CD4-positive, alpha-beta memory T cell (primary cell): ENCODE measurements at regions of chr12 and their contacts with region 1.

Region 1: GRCh38 chr12:44930972-44931600 is 55.0 kb upstream of the NELL2 start:
- DNase-seq: peak in 4 of 5 donors; percentile 61 to 68 (median 68)
- H3K4me3 ChIP-seq: no peak overlapping the region
- H3K4me3 Mint-ChIP-seq: no peak overlapping the region
- H3K27ac ChIP-seq: no peak overlapping the region
- H3K27ac Mint-ChIP-seq: no peak overlapping the region
- H3K4me1 ChIP-seq: no peaks in the 10 kb centered on the region
- H3K4me1 Mint-ChIP-seq: peaks cover 0 to 2% (median under 1%) of the 10 kb centered on the region in 4 donors
- H3K27me3 ChIP-seq: no peaks in the 10 kb centered on the region
- H3K27me3 Mint-ChIP-seq: no peaks in the 10 kb centered on the region

Region 2: DNA sequence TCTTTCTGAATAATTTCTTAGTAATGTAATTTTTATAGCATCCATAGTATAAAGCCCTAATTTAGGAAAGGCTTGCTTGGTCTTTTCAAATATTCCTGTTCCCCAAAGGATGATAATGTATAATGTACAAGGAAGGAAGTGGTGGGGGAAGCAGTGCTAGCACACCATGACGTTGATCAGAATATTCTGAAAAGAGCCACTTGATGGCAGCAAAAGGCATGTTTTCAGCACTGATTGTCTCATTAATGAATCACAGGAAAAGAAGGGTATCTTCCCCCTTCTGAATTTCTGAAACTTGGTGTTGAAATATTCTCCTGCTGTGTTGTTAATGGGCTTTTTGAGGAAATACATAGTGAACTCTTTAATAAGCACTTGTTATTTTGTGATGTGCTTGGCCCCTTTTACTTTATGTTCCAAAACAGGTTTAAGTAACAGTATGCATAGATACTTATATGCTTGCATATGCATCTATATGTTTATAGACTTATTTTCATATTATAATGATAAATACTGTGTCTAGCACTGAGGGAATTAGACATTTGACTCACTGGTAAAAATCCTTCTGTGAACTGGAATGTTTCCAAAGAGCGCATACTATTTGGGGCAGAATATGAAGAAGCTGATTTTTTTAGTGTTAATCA is 973.2 kb before region 1 on chr12:
- CTCF ChIA-PET with region 1: interaction called, 3 read pairs
- POLR2A ChIA-PET with region 1: no interaction called
- intact Hi-C with region 1: loop called (anchors 1 kb)
- DNase-seq: peak in 4 of 5 donors; percentile 5 to 10 (median 10)
- H3K4me3 ChIP-seq: no peak overlapping the region
- H3K4me3 Mint-ChIP-seq: no peak overlapping the region
- H3K27ac ChIP-seq: no peak overlapping the region
- H3K27ac Mint-ChIP-seq: no peak overlapping the region
- H3K4me1 ChIP-seq: no peaks in the 10 kb centered on the region
- H3K4me1 Mint-ChIP-seq: peaks cover 0 to 20% (median 4%) of the 10 kb centered on the region in 4 donors
- H3K27me3 ChIP-seq: no peaks in the 10 kb centered on the region
- H3K27me3 Mint-ChIP-seq: no peaks in the 10 kb centered on the region

Region 3: GRCh38 chr12:44015335-44015941 is 915.6 kb before region 1 on chr12:
- CTCF ChIA-PET with region 1: interaction called, 35 read pairs
- POLR2A ChIA-PET with region 1: no interaction called
- intact Hi-C with region 1: no loop called
- DNase-seq: peak in 4 of 5 donors; percentile 39 to 46 (median 41)
- H3K4me3 ChIP-seq: no peak overlapping the region
- H3K4me3 Mint-ChIP-seq: no peak overlapping the region
- H3K27ac ChIP-seq: no peak overlapping the region
- H3K27ac Mint-ChIP-seq: no peak overlapping the region
- H3K4me1 ChIP-seq: no peaks in the 10 kb centered on the region
- H3K4me1 Mint-ChIP-seq: peaks cover 0 to 2% (median under 1%) of the 10 kb centered on the region in 4 donors
- H3K27me3 ChIP-seq: no peaks in the 10 kb centered on the region
- H3K27me3 Mint-ChIP-seq: no peaks in the 10 kb centered on the region

Region 4: GRCh38 chr12:44317651-44318126 is 613.4 kb before region 1 on chr12:
- CTCF ChIA-PET with region 1: interaction called, 4 read pairs
- POLR2A ChIA-PET with region 1: no interaction called
- intact Hi-C with region 1: loop called (anchors 2 kb)
- DNase-seq: no peak
- H3K4me3 ChIP-seq: no peak overlapping the region
- H3K4me3 Mint-ChIP-seq: no peak overlapping the region
- H3K27ac ChIP-seq: no peak overlapping the region
- H3K27ac Mint-ChIP-seq: no peak overlapping the region
- H3K4me1 ChIP-seq: no peaks in the 10 kb centered on the region
- H3K4me1 Mint-ChIP-seq: peaks cover 0 to 2% (median 0%) of the 10 kb centered on the region in 4 donors
- H3K27me3 ChIP-seq: no peaks in the 10 kb centered on the region
- H3K27me3 Mint-ChIP-seq: no peaks in the 10 kb centered on the region

Region 5: DNA sequence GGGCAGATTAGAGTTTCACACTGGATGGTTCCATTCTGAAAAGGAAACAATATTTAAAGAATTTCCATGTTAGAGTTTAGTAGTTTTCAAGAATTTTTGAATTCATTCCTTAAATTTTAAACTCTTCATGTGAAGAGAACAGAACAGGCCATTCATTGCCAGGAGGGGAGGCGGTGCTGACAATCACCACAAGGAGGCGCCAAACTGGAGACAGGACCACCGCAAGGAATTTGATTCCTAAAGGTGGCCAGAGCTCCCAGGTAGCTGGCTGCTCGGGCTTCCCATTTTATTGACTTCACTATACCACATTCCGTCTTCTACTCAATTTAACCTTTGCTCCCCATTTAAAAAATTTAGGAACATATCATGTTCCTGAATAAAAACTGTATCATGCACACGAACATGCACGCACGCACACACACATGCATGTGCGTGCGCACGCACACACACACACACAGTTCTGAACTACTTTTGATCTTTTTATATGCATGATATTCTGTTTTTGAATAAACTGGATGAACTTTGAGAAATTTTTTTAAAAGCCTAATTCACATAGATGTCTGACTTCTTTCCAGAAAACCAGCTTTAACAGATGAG is 156.2 kb before region 1 on chr12:
- CTCF ChIA-PET with region 1: interaction called, 22 read pairs
- POLR2A ChIA-PET with region 1: no interaction called
- intact Hi-C with region 1: loop called (anchors 1 kb)
- DNase-seq: peak; percentile 44 to 54 (median 44)
- H3K4me3 ChIP-seq: no peak overlapping the region
- H3K4me3 Mint-ChIP-seq: no peak overlapping the region
- H3K27ac ChIP-seq: no peak overlapping the region
- H3K27ac Mint-ChIP-seq: peak overlapping the region in 2 of 7 donors; percentile 20 to 74
- H3K4me1 ChIP-seq: no peaks in the 10 kb centered on the region
- H3K4me1 Mint-ChIP-seq: peaks cover 0 to 4% (median 2%) of the 10 kb centered on the region in 4 donors
- H3K27me3 ChIP-seq: no peaks in the 10 kb centered on the region
- H3K27me3 Mint-ChIP-seq: no peaks in the 10 kb centered on the region

Region 6: DNA sequence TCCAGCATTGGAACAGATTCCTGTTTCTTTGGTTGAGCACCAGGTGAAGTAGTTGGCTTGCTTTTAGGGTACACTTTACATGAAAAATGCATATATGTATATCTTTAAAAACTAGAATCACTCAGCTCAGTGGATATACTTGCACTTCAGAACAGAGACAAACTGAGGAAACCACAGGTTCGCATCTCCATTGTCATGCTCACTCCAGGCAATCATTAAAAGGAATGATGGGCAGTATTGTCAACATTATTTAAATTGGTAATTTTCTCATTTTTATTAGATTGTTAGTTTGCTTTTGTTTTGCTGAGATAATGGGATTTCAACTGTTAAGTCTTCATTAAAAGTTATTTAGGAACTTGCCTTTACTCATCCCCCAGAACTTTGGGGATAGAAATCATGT is 16.1 kb after region 1 on chr12:
- CTCF ChIA-PET with region 1: interaction called, 20 read pairs
- POLR2A ChIA-PET with region 1: no interaction called
- intact Hi-C with region 1: no loop called
- DNase-seq: no peak
- H3K4me3 ChIP-seq: no peak overlapping the region
- H3K4me3 Mint-ChIP-seq: no peak overlapping the region
- H3K27ac ChIP-seq: no peak overlapping the region
- H3K27ac Mint-ChIP-seq: no peak overlapping the region
- H3K4me1 ChIP-seq: no peaks in the 10 kb centered on the region
- H3K4me1 Mint-ChIP-seq: peaks cover 3 to 5% (median 4%) of the 10 kb centered on the region in 4 donors
- H3K27me3 ChIP-seq: no peaks in the 10 kb centered on the region
- H3K27me3 Mint-ChIP-seq: peaks cover 8 to 15% of the 10 kb centered on the region in 2 donors